ENCODE measurements at regions of chr4 and their contacts with region 1.

Region 1: DNA sequence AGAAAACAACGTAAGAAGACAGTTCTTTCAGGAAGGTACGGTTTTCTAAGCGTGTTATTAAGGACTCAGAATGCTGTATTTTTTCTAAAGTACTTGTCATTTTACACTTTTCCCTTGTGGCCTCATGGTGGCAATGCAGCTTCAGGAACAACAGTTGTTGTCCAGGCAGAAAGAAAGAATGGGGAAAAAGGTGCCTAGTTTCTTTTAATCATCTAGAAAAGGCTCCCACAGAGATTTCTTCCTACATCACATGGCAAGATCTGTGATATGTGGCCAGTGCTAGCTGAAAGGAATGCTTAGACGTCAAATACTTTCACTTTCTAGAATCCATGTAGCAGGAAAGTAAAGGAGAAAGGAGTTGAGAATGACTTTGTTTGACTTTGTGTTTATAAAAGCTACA is 49.0 kb upstream of the TRAM1L1 start:
- DNase-seq: peak in 5 of 10 donors; percentile 16 to 52 (median 31)

Region 2: GRCh38 chr4:117357437-117357836 is 223.1 kb after region 1 on chr4:
- intact Hi-C with region 1: no loop called
- DNase-seq: no peak

Region 3: DNA sequence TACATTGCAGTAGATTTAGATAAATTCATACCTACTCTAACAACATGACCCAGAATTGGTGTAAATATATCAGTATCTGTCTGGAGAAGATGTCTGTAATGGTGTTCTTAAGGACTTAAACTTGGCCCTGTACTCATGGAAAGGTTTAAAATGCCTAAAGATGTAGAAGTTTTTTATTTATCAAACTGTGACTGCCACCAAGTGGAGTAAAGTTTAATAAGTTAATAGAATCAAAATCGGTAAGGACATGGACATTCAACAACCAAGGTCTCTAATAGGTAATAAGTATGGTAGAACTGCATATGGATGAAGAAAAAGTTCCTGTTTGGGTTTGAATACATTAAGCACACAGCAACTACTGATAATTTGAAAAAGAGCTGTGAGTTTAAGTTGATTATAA is 425.9 kb after region 1 on chr4:
- intact Hi-C with region 1: loop called (anchors 1 kb)
- DNase-seq: no peak

Region 4: DNA sequence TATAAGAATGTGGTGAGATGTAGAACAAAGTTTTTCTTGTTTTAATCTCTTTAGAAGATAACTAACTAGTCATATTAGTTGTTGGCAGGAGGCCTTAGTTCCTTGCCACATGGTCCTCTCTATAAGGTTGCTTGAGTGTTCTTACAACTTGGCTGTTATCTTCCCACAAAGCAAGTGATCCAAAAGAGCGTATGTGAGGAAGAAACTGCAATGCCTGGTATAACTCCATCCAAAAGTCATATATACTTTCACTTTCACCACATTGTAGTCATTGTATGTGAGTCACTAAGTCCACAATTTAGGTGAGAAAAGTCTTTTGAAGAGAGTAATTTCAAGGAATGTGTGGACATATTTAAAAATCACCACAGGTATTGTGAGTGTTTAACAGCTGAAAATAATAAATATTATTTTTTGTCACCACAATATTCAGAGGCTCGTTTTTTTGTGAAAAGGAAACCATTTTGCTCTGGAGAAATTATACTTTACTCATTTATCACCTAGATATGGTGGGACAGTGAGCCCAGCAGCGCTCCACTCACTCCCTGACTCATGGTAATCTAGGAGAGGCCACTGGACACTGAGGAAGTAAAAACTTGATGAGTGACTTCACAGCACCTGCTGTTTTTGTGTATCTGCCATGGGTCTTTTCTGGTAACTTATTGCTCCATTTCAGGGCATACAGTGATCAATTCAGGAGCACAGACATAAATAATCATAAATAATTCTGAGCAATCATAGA is 530.5 kb after region 1 on chr4:
- intact Hi-C with region 1: no loop called
- DNase-seq: no peak

Region 5: GRCh38 chr4:118034053-118034785 is 899.8 kb after region 1 on chr4 and contains the start of gene NDST3:
- intact Hi-C with region 1: loop called (anchors 2 kb)
- DNase-seq: peak; percentile 64 to 97 (median 72)

Region 6: DNA sequence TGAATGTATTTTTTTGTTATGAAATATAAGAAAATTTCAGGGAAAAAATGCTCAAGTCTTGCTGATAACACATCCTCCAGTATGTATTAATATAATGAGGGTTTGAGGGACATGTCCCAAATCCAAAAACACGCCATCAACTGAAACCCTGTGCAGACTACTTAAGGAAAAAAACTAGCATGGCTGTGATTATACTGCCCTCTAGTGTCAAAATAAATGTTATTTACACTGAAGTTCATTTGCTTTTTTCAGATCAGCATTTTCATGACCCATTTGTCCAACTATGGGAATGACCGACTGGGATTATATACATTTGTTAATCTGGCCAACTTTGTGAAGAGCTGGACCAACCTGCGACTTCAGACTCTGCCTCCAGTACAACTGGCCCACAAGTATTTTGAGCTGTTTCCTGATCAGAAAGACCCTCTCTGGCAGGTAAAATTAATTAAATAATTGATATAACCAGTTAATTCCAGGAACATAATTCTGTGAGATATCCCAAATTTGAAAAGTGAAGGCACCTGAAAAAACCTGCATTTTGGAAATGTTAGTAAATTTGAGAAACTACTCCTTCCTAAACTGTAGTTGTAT is 1089.9 kb after region 1 on chr4:
- intact Hi-C with region 1: loop called (anchors 10 kb)
- DNase-seq: no peak

Region 7: DNA sequence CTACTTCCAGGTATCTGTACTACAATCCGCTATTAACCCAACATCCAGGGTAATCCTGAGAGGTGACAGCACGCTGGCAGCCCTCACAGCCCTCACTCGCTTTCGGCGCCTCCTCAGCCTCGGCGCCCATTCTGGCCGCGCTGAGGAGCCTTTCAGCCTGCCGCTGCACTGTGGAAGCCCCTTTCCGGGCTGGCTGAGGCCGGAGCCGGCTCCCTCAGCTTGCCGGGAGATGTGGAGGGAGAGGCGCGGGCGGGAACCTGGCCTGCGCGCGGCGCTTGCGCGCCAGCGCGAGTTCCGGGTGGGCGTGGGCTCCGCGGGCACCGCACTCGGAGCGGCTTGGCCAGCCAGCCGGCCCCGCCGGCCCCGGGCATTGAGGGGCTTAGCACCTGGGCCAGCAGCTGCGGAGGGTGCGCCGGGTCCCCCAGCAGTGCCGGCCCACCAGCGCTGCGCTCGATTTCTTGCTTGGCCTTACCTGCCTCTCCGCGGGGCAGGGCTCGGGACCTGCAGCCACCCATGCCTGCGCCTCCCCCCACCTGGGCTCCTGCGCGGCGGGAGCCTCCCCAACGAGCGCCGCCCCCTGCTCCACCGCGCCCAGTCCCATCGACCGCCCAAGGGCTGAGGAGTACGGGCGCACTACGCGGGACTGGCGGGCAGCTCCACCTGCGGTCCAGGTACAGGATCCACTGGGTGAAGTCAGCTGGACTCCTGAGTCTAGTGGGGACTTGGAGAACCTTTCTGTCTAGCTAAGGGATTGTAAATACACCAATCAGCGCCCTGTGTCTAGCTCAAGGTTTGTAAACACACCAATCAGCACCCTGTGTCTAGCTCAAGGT is 1131.1 kb after region 1 on chr4:
- intact Hi-C with region 1: loop called (anchors 10 kb)
- DNase-seq: peak in 6 of 10 donors; percentile 19 to 89 (median 52)